Spleen (tissue), 13 donors: ENCODE measurements at regions of chr9 and their contacts with region 1.

Region 1: GRCh38 chr9:32378993-32379729 is 5.3 kb upstream of the ACO1 start:
- DNase-seq: no peak
- H3K4me3 ChIP-seq: no peak overlapping the region
- H3K27ac ChIP-seq: no peak overlapping the region
- H3K4me1 ChIP-seq: peaks cover 6 to 25% (median 20%) of the 10 kb centered on the region in 6 donors
- H3K27me3 ChIP-seq: peaks cover 0 to 29% (median 0%) of the 10 kb centered on the region in 7 donors
- CTCF ChIP-seq: peak; percentile 42 to 94 (median 78)
- POLR2A ChIP-seq: no peak

Region 2: DNA sequence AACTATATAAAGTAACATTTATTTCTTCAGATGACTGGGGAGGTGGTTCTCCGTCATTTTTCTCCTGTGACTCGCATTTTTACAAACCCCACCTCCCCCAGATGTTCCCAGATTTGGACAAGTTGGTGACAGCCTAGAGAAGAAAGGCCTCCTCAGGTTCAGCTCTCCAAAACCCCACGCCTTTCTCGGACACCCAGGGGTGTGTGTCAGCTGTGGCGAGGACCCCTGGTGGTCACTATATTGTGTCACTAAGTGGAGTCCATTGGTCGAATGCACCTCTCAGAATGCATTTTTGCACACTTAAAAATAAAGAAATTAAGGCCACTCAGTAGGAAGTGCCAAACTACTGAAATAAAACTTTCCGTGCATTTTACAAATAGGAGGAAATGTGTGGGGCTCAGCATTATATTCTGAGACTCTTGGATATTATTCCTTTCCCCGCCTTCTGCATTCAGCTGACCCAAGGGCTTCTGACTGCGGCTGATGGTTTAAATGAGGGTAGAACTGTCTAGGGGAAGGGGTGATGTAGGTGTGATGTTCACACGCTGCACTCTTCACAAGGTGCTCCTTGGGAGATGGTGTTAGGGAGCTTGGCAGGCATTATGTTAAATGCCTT is 52.9 kb after region 1 on chr9:
- intact Hi-C with region 1: loop called (anchors 5 kb)
- DNase-seq: peak; percentile 77
- H3K4me3 ChIP-seq: no peak overlapping the region
- H3K27ac ChIP-seq: no peak overlapping the region
- H3K4me1 ChIP-seq: no peaks in the 10 kb centered on the region
- H3K27me3 ChIP-seq: no peaks in the 10 kb centered on the region
- CTCF ChIP-seq: peak in 7 of 11 experiments; percentile 34 to 68 (median 61)
- POLR2A ChIP-seq: no peak

Region 3: GRCh38 chr9:32579706-32580331 is 200.7 kb after region 1 on chr9:
- intact Hi-C with region 1: loop called (anchors 2 kb)
- DNase-seq: peak; percentile 88
- H3K4me3 ChIP-seq: peak overlapping the region in 2 of 8 donors; percentile 5 to 16
- H3K27ac ChIP-seq: no peak overlapping the region
- H3K4me1 ChIP-seq: peaks cover 0 to 11% (median 0%) of the 10 kb centered on the region in 6 donors
- H3K27me3 ChIP-seq: peaks cover 0 to 35% (median 0%) of the 10 kb centered on the region in 7 donors
- CTCF ChIP-seq: peak; percentile 78 to 95 (median 82)
- POLR2A ChIP-seq: no peak

Region 4: DNA sequence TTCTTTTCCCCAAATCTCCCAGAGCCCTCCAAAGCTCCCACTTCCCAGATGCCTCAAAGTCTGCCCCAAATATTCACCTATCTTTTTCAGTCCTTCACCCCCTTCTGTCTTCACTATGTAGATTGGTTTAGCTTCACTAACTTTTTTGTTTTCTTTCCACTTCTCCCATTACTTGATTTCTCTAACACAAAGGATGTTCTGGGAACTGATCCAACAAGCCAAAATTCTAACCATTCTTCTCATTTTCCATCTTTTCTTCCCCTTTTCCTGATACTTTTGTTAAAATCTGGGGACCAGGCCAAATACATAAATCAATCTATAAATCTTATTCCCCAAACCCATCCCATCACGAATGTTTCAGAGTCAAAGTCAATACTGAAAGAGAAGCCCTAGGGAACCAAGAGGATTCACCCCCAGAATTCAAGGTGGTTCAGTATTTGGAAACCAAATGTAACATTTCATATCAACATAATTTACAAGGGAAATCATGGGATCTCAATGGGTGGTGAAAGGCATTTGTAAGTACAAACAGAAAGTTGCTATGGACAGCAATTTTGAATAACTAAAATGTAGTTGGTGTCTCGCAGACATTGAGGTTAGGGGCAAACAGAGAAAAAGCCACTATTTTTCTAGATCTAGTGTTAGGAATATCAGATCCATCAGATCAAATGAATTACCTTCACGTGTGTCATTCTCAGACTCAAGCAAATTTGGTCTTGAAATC is 587.0 kb after region 1 on chr9:
- intact Hi-C with region 1: loop called (anchors 5 kb)
- DNase-seq: no peak
- H3K4me3 ChIP-seq: no peak overlapping the region
- H3K27ac ChIP-seq: no peak overlapping the region
- H3K4me1 ChIP-seq: no peaks in the 10 kb centered on the region
- H3K27me3 ChIP-seq: no peaks in the 10 kb centered on the region
- CTCF ChIP-seq: no peak
- POLR2A ChIP-seq: no peak